K562 (cell line): ENCODE measurements at regions of chr2 and their contacts with region 1.

Region 1: DNA sequence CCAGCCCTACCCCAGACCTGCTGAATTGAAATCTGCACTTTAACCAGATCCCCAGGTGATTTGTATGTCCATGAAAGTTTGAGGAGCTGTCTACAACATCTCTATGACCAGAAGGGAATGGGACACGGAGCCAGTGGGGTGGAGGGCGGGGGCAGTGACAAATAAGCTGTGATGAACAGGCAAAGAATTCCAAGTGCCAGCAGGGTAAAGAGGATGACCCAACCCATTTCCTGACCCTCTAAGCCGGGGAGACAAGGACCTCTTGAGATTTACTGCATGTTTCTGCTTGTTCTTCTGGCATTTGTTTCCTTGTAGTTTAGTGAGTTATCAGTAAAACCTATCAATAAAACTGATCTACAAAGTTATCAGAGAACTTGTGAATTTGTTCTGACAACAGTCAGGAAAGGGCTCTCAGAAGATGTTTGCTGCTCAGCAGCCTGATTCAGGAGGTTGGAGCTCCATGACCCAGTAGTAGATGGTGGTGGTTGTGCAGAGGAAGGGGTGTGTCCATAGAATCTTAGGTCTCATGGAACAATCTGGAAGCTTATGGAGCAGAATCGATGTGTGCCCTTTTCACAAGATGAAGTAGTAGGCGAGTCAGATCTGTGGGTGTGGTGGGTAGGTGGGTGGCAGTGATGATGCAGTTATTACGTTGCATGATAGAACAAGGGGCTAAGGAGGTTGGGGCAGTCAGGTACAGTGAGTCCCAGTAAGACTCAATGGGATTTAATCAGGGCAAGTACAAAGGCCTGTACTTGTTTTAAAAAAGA is 8.9 kb downstream of the TET3 start:
- DNase-seq: no peak
- ATAC-seq: no peak
- H3K4me3 ChIP-seq: no peak overlapping the region
- H3K27ac ChIP-seq: no peak overlapping the region; the same call in 2 of the 3 replicates
- H3K4me1 ChIP-seq: peaks cover 9 to 26% of the 10 kb centered on the region in 2 experiments; a peak in 3 of 5 replicates
- H3K27me3 ChIP-seq: no peaks in the 10 kb centered on the region
- CTCF ChIP-seq: no peak
- EP300 ChIP-seq: no peak
- POLR2A ChIP-seq: no peak
- RAD21 ChIP-seq: no peak

Region 2: DNA sequence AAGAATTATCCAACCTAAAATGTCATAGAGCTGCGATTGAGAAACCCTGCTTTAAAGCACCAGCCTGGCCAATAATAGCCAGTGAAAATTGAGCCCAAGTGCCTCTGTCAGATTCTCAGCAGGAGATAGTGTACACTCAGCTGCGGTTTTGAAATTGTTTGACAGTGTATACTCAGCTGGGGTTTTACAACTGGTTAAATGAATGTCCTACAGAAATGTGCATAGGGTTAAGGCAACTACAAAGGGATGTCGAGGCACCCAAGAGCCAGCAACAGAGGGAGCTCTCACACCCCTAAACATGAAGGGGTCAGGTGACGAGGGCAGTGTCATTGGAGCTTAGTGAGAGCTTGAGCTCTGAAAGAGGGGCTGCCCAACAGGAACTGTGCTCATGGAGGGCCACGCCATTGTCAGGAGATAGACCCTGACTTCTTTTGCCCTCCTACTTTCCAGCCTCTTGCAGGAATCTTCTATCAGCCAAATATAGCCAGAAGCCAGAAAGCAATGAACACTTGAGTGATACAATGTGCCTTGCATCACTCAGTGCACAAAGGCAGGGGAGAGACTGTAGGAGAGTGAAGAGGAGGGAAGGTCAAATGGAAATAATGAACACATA is 85.6 kb before region 1 on chr2:
- CTCF ChIA-PET with region 1: no interaction called
- POLR2A ChIA-PET with region 1: no interaction called
- in situ Hi-C with region 1: no loop called
- intact Hi-C with region 1: loop called (anchors 2 kb)
- DNase-seq: peak in 3 of 4 experiments; percentile 27 to 73 (median 63)
- ATAC-seq: peak; percentile 97
- H3K4me3 ChIP-seq: no peak overlapping the region
- H3K27ac ChIP-seq: no peak overlapping the region
- H3K4me1 ChIP-seq: no peaks in the 10 kb centered on the region; a peak in 1 of 5 replicates
- H3K27me3 ChIP-seq: no peaks in the 10 kb centered on the region
- CTCF ChIP-seq: peak; percentile 69 to 78 (median 73)
- EP300 ChIP-seq: no peak
- POLR2A ChIP-seq: no peak
- RAD21 ChIP-seq: peak; percentile 68 to 87